ENCODE measurements at regions of chrX and their contacts with region 1.

Region 1: GRCh38 chrX:43121637-43122036 is 343.7 kb upstream of the PPP1R2C start:
- DNase-seq: no peak
- ATAC-seq: 0 out of 3 replicates have a peak, but pooled peaks have one; percentile 36
- H3K4me3 ChIP-seq: no peak overlapping the region
- H3K27ac ChIP-seq: no peak overlapping the region
- H3K4me1 ChIP-seq: no peaks in the 10 kb centered on the region
- H3K27me3 ChIP-seq: no peaks in the 10 kb centered on the region
- CTCF ChIP-seq: peak; percentile 14 to 20 (median 16); a peak in 2 of 6 replicates
- EP300 ChIP-seq: no peak
- POLR2A ChIP-seq: no peak
- RAD21 ChIP-seq: peak; percentile 62

Region 2: DNA sequence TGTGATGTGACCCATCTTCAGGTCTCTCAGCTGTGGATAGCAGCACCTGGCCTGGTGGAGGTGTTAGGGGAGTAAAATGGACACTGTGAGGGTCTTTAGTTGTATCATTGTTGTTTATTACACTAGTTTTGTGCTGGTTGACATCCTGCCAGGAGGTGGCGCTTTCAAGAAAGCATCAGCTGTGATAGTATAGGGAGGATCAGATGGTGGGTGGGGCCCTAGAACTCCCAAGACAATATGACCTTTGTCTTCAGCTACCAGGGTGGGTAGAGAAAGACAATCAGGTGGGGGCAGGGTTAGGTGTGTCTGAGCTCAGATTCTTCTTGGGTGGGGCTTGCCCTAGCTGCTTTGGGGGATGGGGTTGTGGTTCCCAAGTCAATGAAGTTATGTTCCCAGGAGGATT is 506.5 kb before region 1 on chrX:
- CTCF ChIA-PET with region 1: interaction called, 7 read pairs
- POLR2A ChIA-PET with region 1: no interaction called
- RAD21 ChIA-PET with region 1: interaction called, 3 read pairs
- SMC1A ChIA-PET with region 1: no interaction called
- in situ Hi-C with region 1: no loop called
- intact Hi-C with region 1: loop called (anchors 10 kb)
- DNase-seq: no peak
- ATAC-seq: peak; percentile 29; the same call in 1 of the 3 replicates
- H3K4me3 ChIP-seq: no peak overlapping the region
- H3K27ac ChIP-seq: no peak overlapping the region
- H3K4me1 ChIP-seq: no peaks in the 10 kb centered on the region
- H3K27me3 ChIP-seq: no peaks in the 10 kb centered on the region
- CTCF ChIP-seq: peak; percentile 16 to 33 (median 33); a peak in 3 of 6 replicates
- EP300 ChIP-seq: no peak
- POLR2A ChIP-seq: no peak
- RAD21 ChIP-seq: peak; percentile 56